ENCODE measurements at regions of chr5 and their contacts with region 1.

Region 1: DNA sequence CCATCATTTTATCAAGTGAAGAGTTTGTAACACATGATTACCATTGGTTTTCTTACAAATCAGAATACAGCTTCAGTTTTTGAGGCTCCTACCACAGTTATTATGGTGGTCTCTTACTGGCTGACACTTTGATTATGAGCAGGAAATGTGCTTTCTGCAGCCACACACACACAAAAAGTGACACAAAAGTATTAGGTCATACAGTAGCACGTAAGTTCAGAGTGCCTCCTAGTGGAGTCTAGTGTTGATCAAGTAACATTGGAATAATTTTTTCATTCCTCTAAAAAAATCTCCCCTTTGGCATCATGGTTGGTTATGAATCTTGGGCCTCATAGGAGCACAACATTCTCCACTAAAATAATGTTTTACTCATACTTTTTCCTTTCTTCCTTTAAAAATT is 37.6 kb downstream of the PAM start:
- ATAC-seq: peak in 2 of 8 experiments; percentile 37 to 39
- H3K4me3 ChIP-seq: no peak overlapping the region
- H3K27ac ChIP-seq: no peak overlapping the region
- H3K4me1 ChIP-seq: peaks cover 11% of the 10 kb centered on the region in 2 donors

Region 2: DNA sequence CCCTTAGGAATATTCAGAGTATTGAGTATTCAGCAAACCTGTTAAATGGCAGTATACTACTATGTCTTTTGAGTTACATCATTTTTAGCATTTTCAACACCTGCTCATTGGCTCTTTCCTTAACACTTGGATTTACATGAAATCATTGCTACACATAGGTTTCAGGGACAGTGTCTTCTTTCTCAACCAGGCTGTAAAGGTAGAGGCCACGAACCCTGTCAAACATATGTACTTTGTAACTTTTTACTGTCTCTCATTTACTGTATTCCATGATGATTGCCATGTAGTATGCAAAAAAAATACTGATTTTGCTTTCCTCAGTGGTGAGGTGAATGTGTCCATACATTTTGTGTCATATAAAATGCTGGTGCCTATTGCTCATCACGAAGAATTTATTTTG is 761.0 kb before region 1 on chr5:
- in situ Hi-C with region 1: no loop called
- ATAC-seq: no peak
- H3K4me3 ChIP-seq: no peak overlapping the region
- H3K27ac ChIP-seq: no peak overlapping the region
- H3K4me1 ChIP-seq: peaks cover 0 to 3% of the 10 kb centered on the region in 2 donors

Region 3: GRCh38 chr5:102583276-102584124 is 209.2 kb before region 1 on chr5:
- in situ Hi-C with region 1: loop called in 1 of 9 experiments (anchors 25 kb)
- ATAC-seq: peak in 5 of 8 experiments; percentile 27 to 65 (median 57)
- H3K4me3 ChIP-seq: no peak overlapping the region
- H3K27ac ChIP-seq: no peak overlapping the region
- H3K4me1 ChIP-seq: peaks cover 0 to 9% of the 10 kb centered on the region in 2 donors

Region 4: DNA sequence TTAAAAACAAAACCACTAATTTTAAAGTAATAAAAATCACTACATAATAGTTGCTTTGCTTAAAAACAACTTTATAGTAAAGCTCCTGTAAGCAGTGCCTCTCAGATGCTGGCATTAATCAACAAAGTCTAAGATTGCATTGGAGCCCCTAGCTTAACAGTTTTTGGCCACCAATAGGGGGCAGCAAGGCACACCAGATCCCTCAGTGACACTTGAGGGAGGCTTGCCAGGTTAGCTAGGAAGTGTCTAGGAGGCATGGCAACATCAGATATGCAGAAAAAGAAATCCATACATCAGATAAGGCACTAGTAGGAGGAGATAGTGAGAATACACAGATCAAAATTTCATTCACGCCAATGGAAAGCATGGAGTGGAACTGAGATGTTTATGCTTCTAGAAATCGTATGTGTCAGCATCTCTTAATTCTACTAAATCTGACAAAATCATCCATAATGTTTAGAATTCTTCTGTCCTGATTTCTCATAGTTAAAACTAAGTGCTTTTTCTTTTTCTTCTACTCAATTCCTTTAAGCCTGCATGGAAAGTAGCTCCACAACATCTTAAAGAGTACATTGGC is 111.2 kb before region 1 on chr5:
- in situ Hi-C with region 1: loop called in 1 of 9 experiments (anchors 25 kb)
- ATAC-seq: peak; percentile 84 to 98 (median 92)
- H3K4me3 ChIP-seq: no peak overlapping the region
- H3K27ac ChIP-seq: no peak overlapping the region
- H3K4me1 ChIP-seq: no peaks in the 10 kb centered on the region

Region 5: GRCh38 chr5:103041071-103041676 is 248.5 kb after region 1 on chr5:
- in situ Hi-C with region 1: loop called in 1 of 9 experiments (anchors 25 kb)
- ATAC-seq: peak in 2 of 8 experiments; percentile 36 to 66
- H3K4me3 ChIP-seq: no peak overlapping the region
- H3K27ac ChIP-seq: no peak overlapping the region
- H3K4me1 ChIP-seq: no peaks in the 10 kb centered on the region

Measured in motor neuron (in vitro differentiated cells).